Ovary (tissue), 10 donors: ENCODE measurements at regions of chr12 and their contacts with region 1.

Region 1: DNA sequence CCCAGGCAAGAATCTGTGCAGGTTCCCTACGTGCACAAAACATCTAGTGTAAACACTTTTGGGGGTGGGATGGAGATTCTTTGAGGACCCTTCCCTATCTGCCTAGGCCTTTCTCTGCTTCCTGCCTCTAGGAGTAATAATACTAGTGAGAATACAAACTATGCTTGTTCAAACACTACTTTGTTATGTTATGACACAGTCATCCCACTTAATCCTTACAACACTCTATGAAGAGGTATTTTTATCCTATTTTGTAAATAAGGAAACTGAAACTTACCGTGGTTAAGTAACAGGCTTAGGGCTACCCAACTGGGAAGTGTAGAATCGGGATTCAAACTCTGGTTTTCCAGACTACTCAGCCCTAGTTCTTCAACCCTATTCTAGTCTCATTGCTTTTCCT is 96.5 kb downstream of the KCNA5 start:
- DNase-seq: no peak
- H3K4me3 ChIP-seq: no peak overlapping the region
- H3K27ac ChIP-seq: no peak overlapping the region
- H3K4me1 ChIP-seq: no peaks in the 10 kb centered on the region
- H3K27me3 ChIP-seq: no peaks in the 10 kb centered on the region
- CTCF ChIP-seq: no peak
- EP300 ChIP-seq: no peak
- POLR2A ChIP-seq: no peak

Region 2: DNA sequence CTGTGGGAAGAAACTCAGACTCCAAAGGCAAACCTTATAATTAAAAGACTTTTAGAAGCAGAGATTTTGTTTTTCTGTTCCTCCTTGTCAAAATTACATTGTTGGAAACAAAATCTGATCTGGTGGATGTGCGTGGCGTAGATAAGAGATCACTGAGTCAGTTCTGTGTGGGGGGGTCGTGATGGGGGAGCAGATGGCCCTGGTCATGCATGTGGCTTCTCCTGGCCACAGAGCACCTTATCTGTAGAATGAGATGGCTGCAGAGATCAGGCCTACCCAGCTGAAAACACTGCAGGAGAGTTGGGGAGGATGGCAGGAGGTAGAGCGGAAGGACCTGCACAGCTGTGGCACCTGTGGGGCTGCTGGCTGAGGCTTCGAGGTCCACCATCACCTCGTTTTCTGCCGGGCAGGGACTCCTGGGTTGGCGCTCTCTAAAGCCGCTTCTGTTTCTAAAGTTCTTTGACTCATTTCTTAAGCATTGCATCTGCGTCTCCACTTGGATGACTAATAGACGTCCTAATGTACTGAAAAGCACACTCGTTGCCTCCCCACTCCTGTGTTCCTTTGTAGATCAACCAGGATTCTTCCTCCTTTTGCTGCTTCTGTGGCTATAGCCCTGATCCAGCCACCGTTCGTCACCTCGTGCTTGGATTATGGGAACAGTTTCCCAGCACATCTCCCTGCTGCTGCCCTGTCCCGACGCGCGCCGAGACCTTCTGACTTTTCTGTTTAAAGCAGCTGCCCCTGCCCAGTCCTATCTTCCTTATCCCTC is 1969.6 kb before region 1 on chr12:
- intact Hi-C with region 1: loop called in 1 of 4 experiments (anchors 10 kb)
- DNase-seq: no peak
- H3K4me3 ChIP-seq: no peak overlapping the region
- H3K27ac ChIP-seq: no peak overlapping the region
- H3K4me1 ChIP-seq: peaks cover 5% of the 10 kb centered on the region
- H3K27me3 ChIP-seq: no peaks in the 10 kb centered on the region
- CTCF ChIP-seq: no peak
- EP300 ChIP-seq: no peak
- POLR2A ChIP-seq: no peak

Region 3: DNA sequence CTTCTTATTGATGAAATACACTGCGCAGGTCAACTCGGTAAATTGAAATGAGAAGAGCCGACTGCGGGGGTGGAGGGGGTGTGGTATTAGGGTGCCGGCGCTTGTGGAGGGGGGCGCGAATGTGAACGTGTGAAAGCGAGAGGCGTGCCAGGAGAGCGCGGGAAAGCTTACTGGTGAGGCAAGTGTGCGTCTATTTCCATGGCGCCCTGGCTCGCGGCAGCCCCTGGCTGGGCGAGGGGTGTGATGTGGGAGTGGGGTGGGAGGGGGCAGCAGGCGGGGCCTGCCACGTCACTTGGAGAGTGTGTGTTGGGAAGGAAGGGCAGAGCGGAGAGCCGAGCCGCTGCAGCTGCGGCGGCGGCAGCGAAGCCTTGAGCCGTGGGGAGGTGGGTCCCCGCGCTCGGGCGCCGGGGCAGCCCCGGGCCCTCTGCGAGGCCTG is 331.2 kb before region 1 on chr12:
- intact Hi-C with region 1: no loop called
- DNase-seq: peak in 1 of 5 donors; percentile 19
- H3K4me3 ChIP-seq: peak overlapping the region; percentile 18
- H3K27ac ChIP-seq: no peak overlapping the region
- H3K4me1 ChIP-seq: peaks cover 2% of the 10 kb centered on the region
- H3K27me3 ChIP-seq: no peaks in the 10 kb centered on the region
- CTCF ChIP-seq: no peak
- EP300 ChIP-seq: no peak
- POLR2A ChIP-seq: no peak

Region 4: GRCh38 chr12:5280091-5280490 is 139.9 kb after region 1 on chr12:
- intact Hi-C with region 1: no loop called
- DNase-seq: no peak
- H3K4me3 ChIP-seq: no peak overlapping the region
- H3K27ac ChIP-seq: no peak overlapping the region
- H3K4me1 ChIP-seq: no peaks in the 10 kb centered on the region
- H3K27me3 ChIP-seq: no peaks in the 10 kb centered on the region
- CTCF ChIP-seq: no peak
- EP300 ChIP-seq: no peak
- POLR2A ChIP-seq: no peak